ENCODE measurements at regions of chr1 and their contacts with region 1.

Region 1: DNA sequence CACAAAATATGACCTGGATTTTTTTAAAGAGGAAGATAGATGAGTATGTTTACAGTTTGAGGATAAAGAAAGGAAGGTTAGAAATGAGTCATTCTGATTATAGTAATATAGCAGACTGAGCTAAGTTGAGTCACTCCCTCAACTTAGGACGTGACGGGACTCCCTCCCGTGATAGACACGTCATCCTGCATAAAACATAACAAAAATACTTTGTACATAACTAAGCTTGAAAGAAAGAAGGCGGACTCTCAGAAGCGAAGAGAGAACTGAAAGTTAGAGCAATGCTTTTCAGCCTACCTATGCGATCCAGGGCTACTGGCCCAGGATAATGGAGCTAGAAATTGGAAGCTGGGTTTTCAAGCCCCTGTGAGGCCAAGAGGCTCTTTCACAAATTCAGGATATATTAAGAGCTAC is 53.0 kb upstream of the DESI2 start:
- DNase-seq: peak; percentile 54
- H3K4me3 Mint-ChIP-seq: peak overlapping the region; percentile 79
- H3K27ac Mint-ChIP-seq: peak overlapping the region; percentile 94
- H3K4me1 Mint-ChIP-seq: peaks cover 22% of the 10 kb centered on the region
- H3K27me3 Mint-ChIP-seq: peaks cover 9% of the 10 kb centered on the region

Region 2: DNA sequence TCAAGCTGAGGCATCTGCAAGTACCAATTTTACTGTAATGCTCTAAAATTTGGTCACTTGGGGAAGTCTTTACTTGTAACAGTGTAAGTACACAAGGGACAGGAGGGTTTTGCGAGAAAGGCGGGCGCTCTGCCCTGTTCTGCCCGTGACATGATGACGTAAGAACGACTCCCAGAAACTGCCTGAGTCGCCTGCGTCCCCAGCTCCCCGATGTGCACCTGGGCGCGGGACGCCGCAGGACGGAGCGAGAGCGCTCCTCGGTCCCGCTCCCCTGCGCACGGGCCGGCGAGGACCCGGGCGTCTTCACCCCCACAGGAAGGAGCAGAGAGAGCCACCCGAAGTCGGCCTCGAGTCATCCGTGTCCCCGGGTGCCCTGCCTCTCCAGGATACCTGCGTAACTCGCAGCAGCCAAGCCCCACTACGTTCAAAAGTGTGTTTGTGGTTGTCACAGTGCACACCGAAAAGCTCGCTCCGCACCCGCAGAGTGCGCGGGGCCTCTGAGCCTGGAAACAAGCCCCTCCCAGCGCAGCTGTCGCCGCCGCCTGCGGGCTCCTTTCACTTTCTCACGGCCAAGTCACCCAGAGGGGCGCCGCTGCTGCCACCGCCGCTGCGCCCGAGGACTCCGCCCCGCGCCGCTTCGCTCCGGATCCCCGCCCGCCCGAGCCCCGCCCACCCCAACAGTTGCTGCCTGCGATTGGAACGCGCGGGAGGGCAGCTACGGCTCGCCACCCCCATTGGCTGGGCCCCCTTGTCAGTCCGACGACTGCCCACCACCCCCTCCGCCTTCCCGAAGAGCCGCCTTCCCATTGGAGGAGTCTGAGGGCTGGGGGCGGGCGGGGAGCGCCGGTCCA is 552.1 kb before region 1 on chr1:
- intact Hi-C with region 1: loop called (anchors 10 kb)
- DNase-seq: peak; percentile 93
- H3K4me3 Mint-ChIP-seq: peak overlapping the region; percentile 92
- H3K27ac Mint-ChIP-seq: peak overlapping the region; percentile 91
- H3K4me1 Mint-ChIP-seq: peaks cover 36% of the 10 kb centered on the region
- H3K27me3 Mint-ChIP-seq: peaks cover 30% of the 10 kb centered on the region

Region 3: GRCh38 chr1:244730153-244730933 is 130.4 kb after region 1 on chr1:
- intact Hi-C with region 1: loop called (anchors 1 kb)
- DNase-seq: no peak
- H3K4me3 Mint-ChIP-seq: peak overlapping the region; percentile 85
- H3K27ac Mint-ChIP-seq: peak overlapping the region; percentile 48
- H3K4me1 Mint-ChIP-seq: peaks cover 12% of the 10 kb centered on the region
- H3K27me3 Mint-ChIP-seq: peaks cover 32% of the 10 kb centered on the region

Region 4: DNA sequence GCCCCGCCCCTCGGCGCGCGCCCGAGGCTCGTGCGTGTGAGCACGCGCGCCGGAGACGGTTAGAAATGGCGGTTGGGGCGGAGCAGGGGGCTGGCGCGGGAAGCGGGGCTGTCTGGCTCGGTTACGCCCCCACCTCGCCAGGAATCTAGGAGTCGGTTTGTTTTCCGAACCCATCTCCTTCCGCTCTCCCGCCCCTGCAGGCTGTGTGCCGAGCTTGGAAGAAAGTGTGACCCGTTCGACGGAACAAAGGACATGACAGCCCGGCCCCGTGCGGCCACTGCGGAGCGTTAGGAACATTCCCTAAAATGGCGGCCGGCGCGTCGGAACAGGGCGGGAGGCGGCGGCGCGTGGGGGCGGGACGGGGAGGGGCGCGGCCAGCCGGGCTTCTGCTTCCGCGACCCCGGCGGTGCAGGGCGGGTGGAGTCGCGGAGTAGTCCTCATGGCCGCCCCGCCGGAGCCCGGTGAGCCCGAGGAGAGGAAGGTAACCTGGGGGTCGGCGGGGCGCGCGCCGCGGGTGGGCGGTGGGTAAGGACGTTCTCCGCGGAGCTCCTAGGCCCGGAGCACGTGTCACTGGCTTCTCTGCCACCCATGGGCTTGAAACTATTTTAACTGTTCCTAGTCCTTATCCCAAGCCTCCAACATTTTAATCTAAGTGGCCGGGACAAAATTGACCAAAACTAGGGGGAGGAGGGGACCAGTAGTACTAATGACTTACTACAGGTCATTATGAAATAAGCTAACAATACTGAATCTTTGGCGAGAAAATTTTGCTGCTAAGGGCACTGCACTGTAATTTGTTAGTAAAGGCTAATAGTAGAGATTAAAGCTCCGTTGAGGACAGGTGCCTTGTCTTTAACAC is 235.6 kb after region 1 on chr1 and contains the start of gene COX20:
- intact Hi-C with region 1: loop called (anchors 1 kb)
- DNase-seq: peak; percentile 85
- H3K4me3 Mint-ChIP-seq: peak within 1 kb of the TSS; percentile 96
- H3K27ac Mint-ChIP-seq: peak within 1 kb of the TSS; percentile 99
- H3K4me1 Mint-ChIP-seq: peaks cover 56% of the 10 kb centered on the region
- H3K27me3 Mint-ChIP-seq: no peaks in the 10 kb centered on the region
- total RNA-seq, gene COX20: 27.4 and 27.6 TPM in 2 replicates

Region 5: DNA sequence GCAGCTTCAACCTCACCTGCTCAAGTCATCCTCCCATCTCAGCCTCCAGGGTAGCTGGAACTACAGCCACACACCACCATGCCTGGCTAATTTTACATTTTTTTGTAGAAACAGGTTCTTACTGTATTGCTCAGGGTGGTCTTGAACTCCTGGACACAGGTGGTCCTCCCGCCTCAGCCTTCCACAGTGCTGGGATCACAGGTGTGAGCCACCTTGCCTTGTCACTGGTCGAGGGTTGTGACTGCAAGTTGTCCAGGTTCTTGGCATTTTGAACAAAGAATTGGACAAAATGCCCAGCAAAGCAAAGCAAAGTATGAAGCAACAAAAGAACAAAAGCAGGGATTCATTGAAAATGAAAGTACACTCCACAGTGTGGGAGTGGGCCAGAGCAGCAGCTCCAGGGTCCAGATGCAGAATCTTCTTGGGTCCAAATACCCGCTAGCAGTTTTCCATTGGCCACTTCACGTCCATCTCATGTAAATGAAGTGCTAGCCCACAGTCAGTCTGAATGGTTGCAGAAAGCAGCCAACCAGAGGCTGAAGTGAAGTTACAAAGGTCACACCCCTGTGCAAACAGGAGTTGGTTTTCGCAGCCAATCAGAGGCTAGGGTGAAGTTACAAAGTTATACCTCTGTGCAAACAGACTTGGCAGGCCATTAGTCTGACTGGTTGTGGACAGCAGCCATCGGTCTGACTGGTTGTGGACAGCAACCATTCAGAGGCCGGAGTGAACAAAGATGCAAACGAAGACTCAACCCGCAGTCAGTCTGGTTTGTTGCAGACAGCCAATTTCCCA is 445.3 kb after region 1 on chr1:
- intact Hi-C with region 1: loop called (anchors 1 kb)
- DNase-seq: no peak
- H3K4me3 Mint-ChIP-seq: no peak overlapping the region
- H3K27ac Mint-ChIP-seq: no peak overlapping the region
- H3K4me1 Mint-ChIP-seq: peaks cover 6% of the 10 kb centered on the region
- H3K27me3 Mint-ChIP-seq: no peaks in the 10 kb centered on the region

Measured in activated T-helper 1 cell treated with anti-CD3 and anti-CD28 coated beads, Interleukin-12 subunit alpha, Interleukin-12 subunit beta, Interleukin-2, Interleukin-4 antibody, amounts not matched to agents 30 ng/mL and 10 ng/mL and 1 ng/mL, durations not matched to agents 14 hours and 24 hours and 36 hours (primary cell).